ENCODE measurements at regions of chr6 and their contacts with region 1.

Region 1: DNA sequence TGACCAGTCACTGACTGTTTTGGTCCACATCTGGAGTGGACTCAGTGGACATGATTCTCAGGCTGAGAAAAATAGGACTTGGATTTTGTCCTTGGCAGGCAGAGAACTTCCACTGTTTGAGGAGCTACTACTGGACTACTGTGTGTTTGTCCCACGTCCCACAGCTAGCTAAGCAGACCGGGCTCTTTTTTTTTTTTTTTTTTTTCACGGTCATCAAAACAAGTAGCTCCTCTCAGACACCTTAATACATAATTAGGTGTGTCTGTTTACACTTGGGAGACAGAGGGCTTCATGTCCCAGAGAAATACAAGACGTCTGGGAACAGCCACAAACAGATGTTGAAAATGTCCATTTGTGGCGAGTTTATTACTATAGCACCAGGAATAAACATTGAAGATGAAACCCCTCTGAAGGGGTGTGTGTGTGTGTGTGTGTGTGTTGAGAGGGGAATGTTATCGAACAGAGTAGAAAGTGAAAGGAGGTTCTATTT is 155.0 kb upstream of the SUPT3H start:
- DNase-seq: no peak

Region 2: GRCh38 chr6:45260696-45261095 is 272.1 kb before region 1 on chr6:
- intact Hi-C with region 1: loop called in 1 of 2 experiments (anchors 5 kb)
- DNase-seq: no peak

Region 3: DNA sequence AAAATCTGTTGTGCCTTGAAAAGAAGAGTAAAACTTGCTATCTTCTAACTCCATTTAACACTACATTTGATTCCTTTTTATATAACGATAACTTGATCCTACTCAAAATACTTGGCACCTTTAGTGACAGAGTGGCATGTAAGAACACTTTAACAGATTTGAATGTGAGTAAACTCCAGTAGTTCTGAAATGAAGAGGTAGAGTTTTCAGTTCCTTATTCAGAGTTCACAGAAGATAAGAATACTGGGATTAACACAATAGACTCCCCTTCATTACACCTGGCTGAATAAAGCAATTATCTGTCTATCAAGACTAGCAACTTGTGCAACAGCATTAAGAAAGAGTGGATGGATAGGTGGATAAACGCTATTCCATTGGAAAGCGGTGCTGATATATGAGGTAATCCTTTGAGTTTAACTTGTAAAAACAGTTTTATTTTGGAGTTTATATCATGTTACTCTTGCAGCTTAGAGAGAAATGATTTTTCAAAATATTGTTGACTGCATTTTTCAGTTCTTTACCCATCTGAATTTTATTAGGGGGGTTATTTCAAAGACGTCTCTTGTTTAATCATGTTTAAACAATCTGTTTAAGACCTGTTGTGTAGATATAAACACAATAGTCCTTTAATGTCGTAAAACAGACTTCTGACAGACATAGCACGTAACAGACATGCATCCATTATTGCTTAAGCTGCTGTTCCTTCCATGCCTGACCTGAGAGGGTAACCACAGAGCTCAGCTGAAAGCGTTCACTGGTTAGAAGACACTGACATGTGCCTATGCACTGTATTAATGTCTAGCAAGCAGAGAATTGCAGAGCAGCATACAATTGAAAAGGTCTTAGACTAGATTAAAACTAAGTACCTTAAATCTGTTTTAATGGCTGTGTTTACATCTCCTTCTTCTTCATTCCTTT is 52.7 kb before region 1 on chr6:
- intact Hi-C with region 1: no loop called
- DNase-seq: no peak

Region 4: GRCh38 chr6:45566882-45567281 is 34.1 kb after region 1 on chr6:
- intact Hi-C with region 1: no loop called
- DNase-seq: no peak